RWPE1 (cell line): ENCODE measurements at regions of chr6 and their contacts with region 1.

Region 1: DNA sequence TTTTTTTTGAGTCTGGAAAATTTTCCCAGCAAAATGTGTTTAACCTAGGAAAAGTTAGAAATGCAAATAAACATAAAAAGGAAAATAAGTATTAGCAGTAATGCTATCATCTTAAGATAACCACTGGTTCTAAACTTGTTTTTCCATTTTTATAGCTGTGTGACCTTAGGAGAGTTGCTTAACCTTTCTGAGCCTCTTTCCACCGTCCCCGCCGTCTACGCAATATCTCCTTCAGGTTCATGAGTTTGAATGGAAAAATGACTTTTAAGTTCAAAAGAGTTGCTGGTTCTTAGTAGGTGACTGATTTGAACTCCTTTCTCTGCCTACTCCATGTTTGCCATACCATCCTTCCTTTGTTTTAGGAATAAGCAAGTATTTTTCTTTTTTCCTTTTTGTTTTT is 44.0 kb downstream of the GMPR start:
- DNase-seq: no peak
- H3K27ac ChIP-seq: no peak overlapping the region
- CTCF ChIP-seq: no peak

Region 2: GRCh38 chr6:18260448-18261106 is 1978.2 kb after region 1 on chr6:
- CTCF ChIA-PET with region 1: no interaction called
- POLR2A ChIA-PET with region 1: interaction called, 11 read pairs
- DNase-seq: no peak
- H3K27ac ChIP-seq: peak overlapping the region; percentile 85
- CTCF ChIP-seq: no peak